GM12878 (cell line): ENCODE measurements at regions of chr18 and their contacts with region 1.

Region 1: GRCh38 chr18:56575819-56576663 is 62.4 kb downstream of the TXNL1 start:
- DNase-seq: no peak
- ATAC-seq: peak; percentile 90
- H3K4me3 ChIP-seq: no peak overlapping the region
- H3K27ac ChIP-seq: no peak overlapping the region
- H3K4me1 ChIP-seq: no peaks in the 10 kb centered on the region
- H3K27me3 ChIP-seq: no peaks in the 10 kb centered on the region; a peak in 1 of 4 replicates
- CTCF ChIP-seq: peak; percentile 44 to 57 (median 49); a peak in 5 of 6 replicates
- EP300 ChIP-seq: no peak
- POLR2A ChIP-seq: no peak
- RAD21 ChIP-seq: peak; percentile 89

Region 2: GRCh38 chr18:54679318-54680149 is 1896.5 kb before region 1 on chr18:
- CTCF ChIA-PET with region 1: interaction called, 3 read pairs
- POLR2A ChIA-PET with region 1: no interaction called
- RAD21 ChIA-PET with region 1: no interaction called
- SMC1A ChIA-PET with region 1: interaction called, 3 read pairs
- in situ Hi-C with region 1: loop called (anchors 25 kb)
- intact Hi-C with region 1: no loop called
- DNase-seq: peak; percentile 9
- ATAC-seq: peak; percentile 69
- H3K4me3 ChIP-seq: no peak overlapping the region
- H3K27ac ChIP-seq: no peak overlapping the region
- H3K4me1 ChIP-seq: no peaks in the 10 kb centered on the region
- H3K27me3 ChIP-seq: 0 out of 4 replicates have a peak, but pooled peaks cover 0 to 3% of the 10 kb centered on the region in 2 experiments
- CTCF ChIP-seq: peak; percentile 12 to 43 (median 31); a peak in 5 of 6 replicates
- EP300 ChIP-seq: no peak
- POLR2A ChIP-seq: no peak
- RAD21 ChIP-seq: peak; percentile 72

Region 3: DNA sequence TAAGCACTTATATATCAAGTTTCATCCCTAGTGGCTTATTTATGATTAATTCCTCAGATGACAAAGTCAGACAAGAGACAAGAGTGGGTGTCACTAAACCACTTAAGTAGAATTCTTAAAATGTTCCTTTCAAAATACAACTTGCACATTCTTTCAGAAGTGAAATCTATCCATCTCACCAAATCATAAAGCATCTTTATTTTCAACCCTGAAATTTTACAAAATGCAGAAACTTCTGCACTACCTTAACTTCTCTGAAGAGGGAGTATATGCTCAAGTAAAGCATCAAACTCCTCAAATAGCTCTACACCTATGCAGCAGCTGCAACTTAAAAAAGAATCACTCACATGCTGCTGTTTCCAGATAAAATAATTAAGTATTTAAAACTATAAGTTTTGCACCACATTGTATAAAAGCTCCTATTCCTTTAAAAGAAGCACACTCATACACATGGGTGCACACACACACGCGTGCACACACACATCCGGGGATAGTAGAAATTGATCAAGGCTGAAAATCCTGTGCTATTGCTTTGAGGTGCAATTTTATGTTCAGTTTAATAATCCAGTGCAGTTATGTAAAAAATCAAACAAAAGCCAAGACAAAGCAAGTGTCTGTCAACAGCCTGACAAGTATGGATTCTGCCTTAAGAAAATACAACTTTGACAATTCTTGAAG is 1232.5 kb before region 1 on chr18:
- CTCF ChIA-PET with region 1: interaction called, 7 read pairs
- POLR2A ChIA-PET with region 1: no interaction called
- RAD21 ChIA-PET with region 1: interaction called, 3 read pairs
- SMC1A ChIA-PET with region 1: interaction called, 3 read pairs
- in situ Hi-C with region 1: loop called (anchors 10 kb)
- intact Hi-C with region 1: loop called (anchors 5 kb)
- DNase-seq: no peak
- ATAC-seq: peak; percentile 82
- H3K4me3 ChIP-seq: no peak overlapping the region
- H3K27ac ChIP-seq: no peak overlapping the region
- H3K4me1 ChIP-seq: no peaks in the 10 kb centered on the region
- H3K27me3 ChIP-seq: peaks cover 0 to 3% of the 10 kb centered on the region in 2 experiments; a peak in 1 of 4 replicates
- CTCF ChIP-seq: peak; percentile 58 to 65 (median 58); a peak in 5 of 6 replicates
- EP300 ChIP-seq: no peak
- POLR2A ChIP-seq: no peak
- RAD21 ChIP-seq: peak; percentile 68

Region 4: DNA sequence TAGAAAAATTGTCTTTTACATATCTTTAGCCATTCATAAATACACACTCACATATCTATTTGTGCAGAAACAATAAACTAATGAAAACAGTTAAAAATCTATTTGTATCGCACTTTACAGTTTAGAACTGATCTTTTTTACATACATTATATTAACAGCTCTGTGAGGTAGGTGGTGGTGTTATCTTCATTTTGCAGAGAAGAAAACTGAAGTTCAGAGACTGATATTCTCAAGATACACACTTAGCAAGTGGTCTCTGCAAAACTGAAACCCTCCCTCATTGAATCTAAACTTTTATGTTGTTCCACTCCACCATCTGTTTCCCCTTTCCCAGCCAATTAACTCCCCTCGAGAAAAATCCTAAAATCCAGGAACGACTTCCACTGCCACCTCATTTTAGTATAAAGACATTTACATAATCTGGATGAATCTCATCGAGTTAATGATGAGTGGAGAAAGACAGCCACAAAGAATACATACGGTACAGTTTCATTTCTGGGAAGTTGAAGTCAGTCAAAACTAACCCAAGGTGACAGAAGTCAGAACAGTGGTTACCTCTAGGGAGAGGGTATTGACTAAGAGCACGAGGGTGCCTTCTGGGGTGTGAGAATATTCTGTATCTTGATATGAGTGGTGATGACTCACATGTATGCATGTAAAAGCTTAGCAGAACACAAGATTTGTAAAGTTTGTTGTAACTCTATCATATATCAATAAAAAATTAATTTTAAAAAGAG is 463.9 kb before region 1 on chr18:
- CTCF ChIA-PET with region 1: interaction called, 5 read pairs
- POLR2A ChIA-PET with region 1: no interaction called
- RAD21 ChIA-PET with region 1: no interaction called
- SMC1A ChIA-PET with region 1: no interaction called
- in situ Hi-C with region 1: no loop called
- intact Hi-C with region 1: loop called (anchors 10 kb)
- DNase-seq: peak; percentile 45
- ATAC-seq: peak; percentile 97
- H3K4me3 ChIP-seq: no peak overlapping the region
- H3K27ac ChIP-seq: no peak overlapping the region
- H3K4me1 ChIP-seq: 0 out of 2 replicates have a peak, but pooled peaks cover 2% of the 10 kb centered on the region
- H3K27me3 ChIP-seq: no peaks in the 10 kb centered on the region; a peak in 1 of 4 replicates
- CTCF ChIP-seq: no peak
- EP300 ChIP-seq: peak; percentile 71; a peak in 3 of 4 replicates
- POLR2A ChIP-seq: no peak
- RAD21 ChIP-seq: no peak

Region 5: GRCh38 chr18:56431551-56431950 is 144.5 kb before region 1 on chr18:
- CTCF ChIA-PET with region 1: interaction called, 11 read pairs
- POLR2A ChIA-PET with region 1: no interaction called
- RAD21 ChIA-PET with region 1: interaction called, 3 read pairs
- SMC1A ChIA-PET with region 1: no interaction called
- in situ Hi-C with region 1: no loop called
- intact Hi-C with region 1: no loop called
- DNase-seq: no peak
- ATAC-seq: no peak
- H3K4me3 ChIP-seq: no peak overlapping the region
- H3K27ac ChIP-seq: no peak overlapping the region
- H3K4me1 ChIP-seq: no peaks in the 10 kb centered on the region
- H3K27me3 ChIP-seq: no peaks in the 10 kb centered on the region
- CTCF ChIP-seq: no peak
- EP300 ChIP-seq: no peak
- POLR2A ChIP-seq: no peak
- RAD21 ChIP-seq: no peak

Region 6: DNA sequence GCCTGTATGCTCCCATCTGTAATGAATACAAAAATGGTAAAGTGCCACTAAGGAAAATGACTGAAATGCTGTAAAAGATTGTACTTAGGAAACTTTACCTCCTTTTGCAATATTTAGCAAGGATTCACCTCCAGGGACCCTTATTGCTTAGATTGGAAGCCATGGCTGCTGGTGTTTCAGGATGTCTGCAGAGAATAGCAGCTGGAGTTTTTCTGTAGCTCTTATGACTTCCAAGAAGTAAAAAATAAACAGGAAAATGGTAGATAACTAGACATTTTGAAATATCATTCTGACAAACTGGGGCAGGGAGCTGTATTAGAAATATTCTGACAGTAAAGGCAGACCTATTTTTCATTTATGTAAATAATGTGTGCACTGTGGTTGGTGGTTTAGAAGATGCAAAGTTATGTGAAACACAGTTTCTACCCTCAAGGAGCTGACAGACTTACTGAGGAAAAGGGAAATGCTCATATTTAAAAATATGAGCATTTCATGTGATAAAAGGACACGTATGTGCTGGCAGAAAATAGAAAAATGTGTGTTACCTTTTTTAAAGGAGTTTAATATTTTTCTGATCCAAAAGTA is 345.9 kb after region 1 on chr18:
- CTCF ChIA-PET with region 1: no interaction called
- POLR2A ChIA-PET with region 1: no interaction called
- RAD21 ChIA-PET with region 1: no interaction called
- SMC1A ChIA-PET with region 1: no interaction called
- in situ Hi-C with region 1: no loop called
- intact Hi-C with region 1: no loop called
- DNase-seq: no peak
- ATAC-seq: peak; percentile 86
- H3K4me3 ChIP-seq: no peak overlapping the region
- H3K27ac ChIP-seq: no peak overlapping the region
- H3K4me1 ChIP-seq: peaks cover 3% of the 10 kb centered on the region; the same call in 1 of the 2 replicates
- H3K27me3 ChIP-seq: no peaks in the 10 kb centered on the region
- CTCF ChIP-seq: no peak
- EP300 ChIP-seq: no peak
- POLR2A ChIP-seq: no peak
- RAD21 ChIP-seq: no peak